AG04449 (cell line): ENCODE measurements at regions of chr4 and their contacts with region 1.

Region 1: GRCh38 chr4:84582302-84583000 is 476 bp upstream of the CDS1 start:
- DNase-seq: no peak
- H3K4me3 ChIP-seq: peak overlapping the region; percentile 60
- CTCF ChIP-seq: no peak

Region 2: DNA sequence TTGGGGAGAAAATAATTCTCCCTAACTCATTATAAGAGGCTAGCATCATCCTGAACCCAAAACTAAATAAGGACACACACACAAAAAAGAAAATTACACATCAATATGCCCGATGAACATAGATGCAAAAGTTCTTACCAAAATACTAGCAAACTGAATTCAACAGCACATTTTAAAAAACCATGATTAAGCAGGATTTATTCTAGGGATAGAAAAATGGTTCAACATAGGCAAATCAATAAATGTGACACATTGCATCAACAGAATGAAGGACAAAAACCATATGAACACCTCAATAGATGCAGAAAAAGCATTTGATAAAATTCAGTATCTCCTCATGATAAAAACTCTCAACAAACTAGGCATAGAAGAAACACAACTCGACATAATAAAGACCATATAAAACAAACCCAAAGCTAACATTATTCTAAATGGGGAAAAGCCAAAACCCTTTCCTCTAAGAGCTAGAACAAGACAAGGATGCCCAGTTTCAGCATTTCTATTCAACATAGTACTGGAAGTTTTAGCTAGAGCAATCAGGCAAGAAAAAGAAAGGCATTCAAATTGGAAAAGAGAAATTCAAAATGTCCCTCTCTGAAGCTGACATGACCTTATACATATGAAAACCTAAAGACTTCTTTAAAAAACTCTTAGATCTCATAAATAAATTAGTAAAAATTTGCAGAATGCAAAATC is 284.3 kb before region 1 on chr4:
- CTCF ChIA-PET with region 1: no interaction called
- POLR2A ChIA-PET with region 1: no interaction called
- DNase-seq: no peak
- H3K4me3 ChIP-seq: no peak overlapping the region
- CTCF ChIP-seq: no peak

Region 3: GRCh38 chr4:84568496-84568895 is 14.0 kb before region 1 on chr4:
- CTCF ChIA-PET with region 1: interaction called, 10 read pairs
- POLR2A ChIA-PET with region 1: no interaction called
- DNase-seq: no peak
- H3K4me3 ChIP-seq: no peak overlapping the region
- CTCF ChIP-seq: no peak